Tibial artery (tissue), 4 donors: ENCODE measurements at regions of chr16 and their contacts with region 1.

Region 1: GRCh38 chr16:70737377-70738082 is 51.7 kb upstream of the MTSS2 start:
- DNase-seq: peak; percentile 79 to 95
- H3K4me3 ChIP-seq: no peak overlapping the region
- H3K27ac ChIP-seq: peak overlapping the region; percentile 86 to 96
- H3K4me1 ChIP-seq: peaks cover 6 to 47% (median 41%) of the 10 kb centered on the region in 4 donors
- H3K27me3 ChIP-seq: no peaks in the 10 kb centered on the region
- CTCF ChIP-seq: no peak

Region 2: GRCh38 chr16:70454222-70455034 is 283.1 kb before region 1 on chr16 and contains the start of gene FCSK:
- intact Hi-C with region 1: no loop called
- DNase-seq: peak in 1 of 2 donors; percentile 75
- H3K4me3 ChIP-seq: peak within 1 kb of the TSS; percentile 91 to 92
- H3K27ac ChIP-seq: peak within 1 kb of the TSS; percentile 83 to 96
- H3K4me1 ChIP-seq: peaks cover 0 to 20% (median 14%) of the 10 kb centered on the region in 4 donors
- H3K27me3 ChIP-seq: peaks cover 0 to 10% of the 10 kb centered on the region in 2 donors
- CTCF ChIP-seq: peak in 1 of 2 experiments; percentile 17

Region 3: DNA sequence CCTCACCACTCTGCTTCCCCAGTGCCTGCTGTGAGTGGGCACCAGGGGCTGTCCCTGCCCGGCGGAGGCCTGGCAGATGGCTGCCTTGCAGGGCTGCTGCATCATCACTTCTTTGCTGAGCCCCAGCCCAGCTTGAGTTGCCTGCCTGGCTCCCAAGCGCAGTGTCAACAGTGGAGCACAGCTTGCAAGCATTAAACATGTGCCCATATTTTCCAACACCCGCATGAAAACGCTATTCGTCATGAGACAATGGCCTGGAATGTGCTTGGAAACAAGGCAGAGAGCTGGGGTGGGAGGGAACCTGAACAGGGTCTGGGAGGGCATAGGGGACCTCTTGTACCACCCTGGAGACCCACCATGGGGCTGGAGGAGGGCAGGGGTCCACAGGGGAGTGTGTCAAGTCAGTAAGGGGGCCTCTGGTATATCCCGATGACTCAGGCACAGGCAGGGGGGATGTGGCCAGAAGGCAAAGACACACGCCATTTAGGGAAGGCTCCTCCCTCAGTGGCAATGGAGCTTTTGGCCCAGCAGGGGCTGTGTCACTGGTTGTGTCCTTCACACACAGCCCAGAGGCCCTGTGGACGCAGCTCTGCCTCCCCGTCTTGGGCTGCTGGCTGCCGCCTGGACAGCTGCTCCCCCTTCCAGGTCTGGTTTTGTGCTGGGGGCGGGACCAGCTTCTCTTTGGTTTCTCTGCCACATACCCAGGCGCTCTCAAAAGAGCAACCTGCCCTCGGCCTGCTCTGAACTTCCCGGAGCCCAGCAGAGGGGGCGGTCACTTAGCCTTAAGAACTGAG is 34.3 kb before region 1 on chr16:
- intact Hi-C with region 1: loop called (anchors 5 kb)
- DNase-seq: peak; percentile 82 to 96
- H3K4me3 ChIP-seq: no peak overlapping the region
- H3K27ac ChIP-seq: peak overlapping the region; percentile 99 to 100
- H3K4me1 ChIP-seq: peaks cover 4 to 99% (median 96%) of the 10 kb centered on the region in 4 donors
- H3K27me3 ChIP-seq: no peaks in the 10 kb centered on the region
- CTCF ChIP-seq: peak; percentile 60 to 70

Region 4: GRCh38 chr16:70804116-70804733 is 66.7 kb after region 1 on chr16:
- intact Hi-C with region 1: no loop called
- DNase-seq: no peak
- H3K4me3 ChIP-seq: no peak overlapping the region
- H3K27ac ChIP-seq: no peak overlapping the region
- H3K4me1 ChIP-seq: peaks cover 0 to 14% (median 13%) of the 10 kb centered on the region in 4 donors
- H3K27me3 ChIP-seq: peaks cover 0 to 21% of the 10 kb centered on the region in 2 donors
- CTCF ChIP-seq: no peak